Prostate gland (tissue), 2 donors: ENCODE measurements at regions of chr7 and their contacts with region 1.

Region 1: DNA sequence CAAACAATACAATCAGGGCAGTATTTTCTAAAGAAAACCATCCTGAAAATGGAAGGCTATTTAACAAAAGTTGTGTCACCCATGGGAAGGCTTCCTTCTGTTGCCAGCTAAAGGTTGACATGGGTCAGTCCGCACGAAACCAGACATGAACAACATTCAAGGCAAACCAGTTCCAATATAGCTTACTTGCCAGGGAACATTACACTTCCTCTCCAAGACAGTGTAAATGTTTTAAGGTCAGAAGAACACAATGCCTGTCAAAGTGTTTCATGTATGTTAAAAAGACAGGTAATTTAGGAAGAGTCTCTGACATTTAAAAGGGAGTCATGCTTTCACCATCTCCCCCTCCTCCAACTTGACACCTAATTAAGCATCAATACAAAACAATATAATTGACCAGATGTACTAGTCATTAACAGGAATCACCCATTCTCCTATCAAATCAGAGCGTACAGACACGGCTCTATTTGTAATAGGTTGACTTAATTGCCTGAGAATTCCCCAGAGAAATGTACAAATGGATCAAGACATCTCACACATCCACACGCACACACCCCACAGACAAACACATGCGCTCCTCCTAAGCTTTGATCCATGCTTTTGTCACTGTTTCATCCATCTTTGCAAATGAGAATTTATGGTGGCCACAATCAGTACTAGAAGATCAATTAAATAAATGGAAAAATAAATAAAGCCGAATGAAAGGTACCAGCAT is 69.5 kb downstream of the CACNA2D1 start:
- DNase-seq: no peak
- H3K4me3 ChIP-seq: no peak overlapping the region
- H3K27ac ChIP-seq: no peak overlapping the region
- H3K4me1 ChIP-seq: no peaks in the 10 kb centered on the region
- H3K27me3 ChIP-seq: no peaks in the 10 kb centered on the region
- CTCF ChIP-seq: no peak
- POLR2A ChIP-seq: no peak

Region 2: DNA sequence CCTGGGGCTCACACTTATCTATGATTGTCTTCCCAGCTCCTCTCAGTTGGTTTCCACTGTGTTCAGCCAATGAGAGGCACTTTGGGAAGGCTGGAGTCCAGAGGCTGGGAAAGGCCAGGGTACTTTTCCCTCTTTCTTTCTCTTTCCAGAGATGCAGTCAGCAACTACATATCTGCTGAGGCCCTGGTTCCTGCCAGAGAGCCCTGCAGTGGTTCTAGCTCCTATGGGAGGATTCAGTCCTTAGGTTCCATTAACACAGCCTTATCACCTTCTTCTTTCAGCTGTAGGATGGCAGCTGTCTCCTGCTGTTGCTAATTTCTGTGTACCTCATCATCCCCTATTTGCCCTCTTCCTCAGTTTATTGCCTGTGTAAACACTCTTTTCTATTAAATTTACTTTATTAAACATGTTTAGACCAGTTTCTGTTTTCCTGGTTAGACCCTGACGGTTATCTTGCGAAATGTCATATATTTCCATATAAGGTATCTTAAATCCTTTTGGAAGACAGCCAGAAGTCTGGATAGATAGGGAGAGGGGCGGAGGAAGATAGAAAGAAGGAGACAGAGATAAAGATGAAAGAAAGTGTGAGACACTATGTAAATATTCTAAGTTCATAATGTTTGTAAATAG is 704.5 kb before region 1 on chr7:
- intact Hi-C with region 1: no loop called
- DNase-seq: no peak
- H3K4me3 ChIP-seq: no peak overlapping the region
- H3K27ac ChIP-seq: no peak overlapping the region
- H3K4me1 ChIP-seq: no peaks in the 10 kb centered on the region
- H3K27me3 ChIP-seq: no peaks in the 10 kb centered on the region
- CTCF ChIP-seq: no peak
- POLR2A ChIP-seq: no peak

Region 3: DNA sequence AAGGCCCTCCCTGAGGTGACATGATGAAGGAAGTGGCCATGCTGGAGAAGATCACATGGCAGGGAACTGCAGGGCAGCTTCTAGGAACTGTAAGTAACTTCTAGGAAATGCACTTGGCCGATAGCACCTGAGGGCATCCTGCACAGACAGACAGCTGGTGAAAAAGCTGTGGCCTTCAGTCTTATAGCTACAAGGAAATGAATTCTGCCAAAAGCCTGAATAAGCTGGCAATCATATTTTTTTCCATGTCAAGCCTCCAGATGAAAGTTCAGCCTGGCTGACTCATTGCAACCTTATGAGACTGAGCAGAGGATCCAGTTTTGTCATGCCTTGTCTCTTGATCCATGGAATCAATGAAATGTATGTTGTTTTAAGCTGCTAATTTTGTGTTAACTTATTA is 160.6 kb after region 1 on chr7:
- intact Hi-C with region 1: loop called (anchors 5 kb)
- DNase-seq: no peak
- H3K4me3 ChIP-seq: no peak overlapping the region
- H3K27ac ChIP-seq: no peak overlapping the region
- H3K4me1 ChIP-seq: no peaks in the 10 kb centered on the region
- H3K27me3 ChIP-seq: no peaks in the 10 kb centered on the region
- CTCF ChIP-seq: no peak
- POLR2A ChIP-seq: no peak